HEK293 (cell line): ENCODE measurements at regions of chr3 and their contacts with region 1.

Region 1: GRCh38 chr3:168865022-168865551 is 769.4 kb upstream of the GOLIM4 start:
- H3K4me3 ChIP-seq: no peak overlapping the region
- H3K27ac ChIP-seq: no peak overlapping the region
- H3K4me1 ChIP-seq: no peaks in the 10 kb centered on the region
- CTCF ChIP-seq: no peak

Region 2: GRCh38 chr3:168574455-168575158 is 290.5 kb before region 1 on chr3:
- CTCF ChIA-PET with region 1: no interaction called
- POLR2A ChIA-PET with region 1: no interaction called
- H3K4me3 ChIP-seq: no peak overlapping the region
- H3K27ac ChIP-seq: no peak overlapping the region
- H3K4me1 ChIP-seq: no peaks in the 10 kb centered on the region
- CTCF ChIP-seq: no peak

Region 3: GRCh38 chr3:168801794-168802193 is 63.3 kb before region 1 on chr3:
- CTCF ChIA-PET with region 1: no interaction called
- POLR2A ChIA-PET with region 1: no interaction called
- H3K4me3 ChIP-seq: no peak overlapping the region
- H3K27ac ChIP-seq: no peak overlapping the region
- H3K4me1 ChIP-seq: 0 out of 2 replicates have a peak, but pooled peaks cover under 1% of the 10 kb centered on the region
- CTCF ChIP-seq: no peak

Region 4: GRCh38 chr3:168878655-168879054 is 13.6 kb after region 1 on chr3:
- CTCF ChIA-PET with region 1: interaction called, 36 read pairs
- POLR2A ChIA-PET with region 1: no interaction called
- H3K4me3 ChIP-seq: no peak overlapping the region
- H3K27ac ChIP-seq: no peak overlapping the region
- H3K4me1 ChIP-seq: peaks cover 2% of the 10 kb centered on the region; the same call in 1 of the 2 replicates
- CTCF ChIP-seq: no peak

Region 5: GRCh38 chr3:169744366-169745054 is 879.4 kb after region 1 on chr3:
- CTCF ChIA-PET with region 1: interaction called, 14 read pairs
- POLR2A ChIA-PET with region 1: no interaction called
- H3K4me3 ChIP-seq: no peak overlapping the region
- H3K27ac ChIP-seq: no peak overlapping the region
- H3K4me1 ChIP-seq: no peaks in the 10 kb centered on the region
- CTCF ChIP-seq: no peak